Vagina (tissue), 2 donors: ENCODE measurements at regions of chr7 and their contacts with region 1.

Region 1: GRCh38 chr7:35801392-35802101 is 690 bp downstream of the SEPTIN7 start:
- DNase-seq: no peak
- H3K4me3 ChIP-seq: peak overlapping the region; percentile 71 to 90
- H3K27ac ChIP-seq: peak overlapping the region; percentile 99
- H3K4me1 ChIP-seq: peaks cover 54% of the 10 kb centered on the region
- H3K27me3 ChIP-seq: no peaks in the 10 kb centered on the region
- CTCF ChIP-seq: peak in 2 of 3 experiments; percentile 35 to 54
- POLR2A ChIP-seq: no peak

Region 2: GRCh38 chr7:35716038-35716803 is 85.3 kb before region 1 on chr7:
- intact Hi-C with region 1: loop called (anchors 10 kb)
- DNase-seq: no peak
- H3K4me3 ChIP-seq: peak overlapping the region; percentile 17 to 19
- H3K27ac ChIP-seq: no peak overlapping the region
- H3K4me1 ChIP-seq: peaks cover 16% of the 10 kb centered on the region
- H3K27me3 ChIP-seq: no peaks in the 10 kb centered on the region
- CTCF ChIP-seq: no peak
- POLR2A ChIP-seq: no peak

Region 3: DNA sequence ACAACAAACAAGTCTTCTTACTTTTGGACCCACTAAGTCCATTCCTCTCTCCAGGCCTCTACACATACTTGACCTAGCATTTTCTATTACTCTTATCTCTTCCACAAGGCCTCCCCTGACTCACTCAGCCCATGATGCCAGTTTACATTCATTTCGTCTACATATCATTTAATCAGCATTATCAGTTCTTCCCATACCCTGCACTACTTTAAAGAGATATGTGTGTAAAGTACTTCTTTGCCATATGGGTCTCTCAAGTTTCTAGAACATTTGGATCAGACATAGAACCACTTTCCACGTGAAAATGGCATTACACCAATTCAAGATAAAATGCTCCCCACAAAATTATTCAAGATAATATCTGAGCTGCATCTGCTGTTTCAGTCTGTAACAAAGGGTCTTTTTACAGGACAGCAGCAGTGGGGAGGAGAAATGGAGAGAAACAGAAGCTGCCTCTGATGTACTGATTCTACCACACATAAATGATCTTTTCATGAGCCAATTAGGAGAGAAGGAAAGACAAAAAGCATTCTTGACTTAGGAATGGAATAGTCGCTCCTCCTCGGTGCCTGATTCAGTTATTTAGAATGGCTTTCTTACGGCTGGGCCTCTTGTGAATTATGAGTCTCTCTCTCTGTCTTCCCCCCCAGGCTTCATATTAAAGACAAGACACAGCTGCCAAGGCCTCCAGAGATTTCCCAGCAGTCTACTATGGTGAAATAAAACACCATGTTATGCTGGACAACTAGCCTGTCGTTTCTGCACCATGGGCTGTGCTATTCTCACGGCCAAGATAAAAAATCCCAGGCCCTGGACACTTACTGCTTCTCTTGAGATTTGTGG is 47.6 kb before region 1 on chr7:
- intact Hi-C with region 1: loop called (anchors 10 kb)
- DNase-seq: no peak
- H3K4me3 ChIP-seq: peak overlapping the region in 1 of 2 donors; percentile 11
- H3K27ac ChIP-seq: peak overlapping the region; percentile 16
- H3K4me1 ChIP-seq: peaks cover 14% of the 10 kb centered on the region
- H3K27me3 ChIP-seq: no peaks in the 10 kb centered on the region
- CTCF ChIP-seq: no peak
- POLR2A ChIP-seq: no peak